Keratinocyte (primary cell): ENCODE measurements at regions of chr1 and their contacts with region 1.

Region 1: GRCh38 chr1:204128964-204129896 is 22.6 kb downstream of the ETNK2 start:
- DNase-seq: no peak
- H3K4me3 ChIP-seq: peak overlapping the region; percentile 11 to 71 (median 52)
- H3K27ac ChIP-seq: peak overlapping the region; percentile 18
- H3K4me1 ChIP-seq: peaks cover 32% of the 10 kb centered on the region
- H3K27me3 ChIP-seq: no peaks in the 10 kb centered on the region
- CTCF ChIP-seq: peak; percentile 54 to 97 (median 95)

Region 2: DNA sequence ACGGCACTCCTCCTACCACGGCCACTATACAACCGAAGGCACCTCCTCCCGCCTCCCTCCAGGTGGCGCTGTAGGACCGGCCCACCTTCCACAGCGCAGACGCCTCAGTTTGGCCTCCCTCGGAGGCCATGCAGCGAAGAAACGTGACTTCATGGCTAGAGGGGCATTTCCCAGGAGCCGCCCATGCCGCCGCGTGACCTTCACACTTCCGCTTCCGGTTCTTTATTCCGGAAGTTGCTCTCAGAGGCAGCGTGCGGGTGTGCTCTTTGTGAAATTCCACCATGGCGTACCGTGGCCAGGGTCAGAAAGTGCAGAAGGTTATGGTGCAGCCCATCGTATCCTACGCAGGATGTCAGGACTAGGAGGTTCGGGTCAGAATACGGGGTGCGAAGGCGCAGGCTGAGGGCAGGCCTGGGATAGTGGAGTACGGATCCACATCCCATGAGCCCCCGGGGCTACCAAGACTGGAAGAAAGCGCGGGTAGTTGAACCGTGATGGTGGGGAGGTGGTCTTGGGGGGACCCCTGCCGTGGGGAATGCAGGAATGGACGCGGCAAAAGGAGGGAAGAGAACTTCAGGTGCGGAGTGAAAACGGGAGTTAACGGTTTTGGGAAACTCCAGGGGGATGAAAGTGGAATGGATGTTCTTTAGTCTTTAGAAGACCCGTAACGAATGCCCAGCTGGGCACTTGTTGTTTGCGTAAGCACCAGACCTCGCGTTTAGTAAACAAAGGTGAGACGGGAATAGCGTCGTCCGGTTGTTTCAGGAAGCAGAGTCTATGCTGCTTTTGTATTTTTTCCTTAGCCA is 267.6 kb before region 1 on chr1 and contains the start of gene SNRPE:
- dilution Hi-C with region 1: loop called (anchors 25 kb)
- DNase-seq: peak; percentile 94
- H3K4me3 ChIP-seq: peak within 1 kb of the TSS; percentile 63 to 91 (median 82)
- H3K27ac ChIP-seq: peak within 1 kb of the TSS; percentile 93
- H3K4me1 ChIP-seq: peaks cover 36% of the 10 kb centered on the region
- H3K27me3 ChIP-seq: no peaks in the 10 kb centered on the region
- CTCF ChIP-seq: peak; percentile 93 to 99 (median 96)
- polyA plus RNA-seq, gene SNRPE: 108 to 303 TPM (median 235 TPM) in 3 replicates